Esophagus squamous epithelium (tissue), 5 donors: ENCODE measurements at regions of chr16 and their contacts with region 1.

Region 1: GRCh38 chr16:50354629-50355456 is 13.9 kb downstream of the BRD7 start:
- DNase-seq: no peak
- H3K4me3 ChIP-seq: no peak overlapping the region
- H3K27ac ChIP-seq: no peak overlapping the region
- H3K4me1 ChIP-seq: peaks cover 0 to 12% (median 4%) of the 10 kb centered on the region in 3 donors
- H3K27me3 ChIP-seq: no peaks in the 10 kb centered on the region
- CTCF ChIP-seq: peak in 4 of 6 experiments; percentile 52 to 62 (median 58)
- POLR2A ChIP-seq: no peak

Region 2: DNA sequence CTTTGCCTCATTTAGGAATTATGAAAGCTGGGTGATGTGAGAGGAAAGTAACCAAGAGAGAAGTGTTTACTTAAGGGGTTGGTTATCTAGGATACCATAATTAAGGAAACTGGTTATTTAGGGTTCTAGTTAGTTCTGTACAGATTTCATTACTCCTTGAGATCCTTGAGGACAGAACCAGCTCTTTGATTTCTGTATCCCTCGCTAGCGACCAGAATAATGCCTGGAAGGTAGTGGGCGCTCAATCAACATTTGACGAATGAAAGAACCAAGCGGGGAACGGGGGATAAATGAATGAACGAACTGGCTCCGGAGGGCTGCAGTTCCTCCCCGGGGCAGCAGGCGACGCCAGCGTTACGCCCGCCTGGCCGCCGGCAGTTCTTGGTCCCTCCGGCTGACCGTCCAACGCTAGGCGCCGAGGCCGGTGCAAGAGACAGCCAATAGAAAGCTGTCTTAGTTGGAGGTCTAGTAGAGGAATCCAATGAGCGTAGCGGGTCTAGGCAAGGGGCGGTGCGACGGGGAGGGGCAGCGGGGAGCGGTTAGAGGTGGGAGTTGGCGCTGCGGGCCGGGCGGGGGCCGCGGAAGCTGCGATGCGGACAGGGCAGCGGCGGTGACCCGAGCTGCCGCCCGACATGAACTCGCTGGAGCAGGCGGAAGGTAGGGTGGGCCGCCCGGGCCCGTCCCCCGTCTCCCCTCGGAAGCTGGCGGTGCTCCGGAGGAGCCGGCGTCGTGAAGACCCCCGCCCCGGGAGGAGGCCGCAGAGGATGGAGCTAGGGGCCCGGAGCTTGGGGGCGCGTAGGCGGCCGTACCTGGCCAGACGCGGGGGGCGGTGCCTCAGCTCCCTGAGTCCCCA is 329.9 kb before region 1 on chr16 and contains the start of gene CNEP1R1:
- intact Hi-C with region 1: loop called (anchors 10 kb)
- DNase-seq: peak; percentile 80
- H3K4me3 ChIP-seq: peak within 1 kb of the TSS; percentile 87 to 98 (median 97)
- H3K27ac ChIP-seq: peak within 1 kb of the TSS; percentile 88 to 95 (median 92)
- H3K4me1 ChIP-seq: peaks cover 0 to 39% (median 16%) of the 10 kb centered on the region in 3 donors
- H3K27me3 ChIP-seq: no peaks in the 10 kb centered on the region
- CTCF ChIP-seq: peak; percentile 99 to 100 (median 100)
- POLR2A ChIP-seq: peak in 2 of 4 donors; percentile 57 to 75
- total RNA-seq, gene CNEP1R1: 14.1 to 18.4 (median 14.9) TPM

Region 3: DNA sequence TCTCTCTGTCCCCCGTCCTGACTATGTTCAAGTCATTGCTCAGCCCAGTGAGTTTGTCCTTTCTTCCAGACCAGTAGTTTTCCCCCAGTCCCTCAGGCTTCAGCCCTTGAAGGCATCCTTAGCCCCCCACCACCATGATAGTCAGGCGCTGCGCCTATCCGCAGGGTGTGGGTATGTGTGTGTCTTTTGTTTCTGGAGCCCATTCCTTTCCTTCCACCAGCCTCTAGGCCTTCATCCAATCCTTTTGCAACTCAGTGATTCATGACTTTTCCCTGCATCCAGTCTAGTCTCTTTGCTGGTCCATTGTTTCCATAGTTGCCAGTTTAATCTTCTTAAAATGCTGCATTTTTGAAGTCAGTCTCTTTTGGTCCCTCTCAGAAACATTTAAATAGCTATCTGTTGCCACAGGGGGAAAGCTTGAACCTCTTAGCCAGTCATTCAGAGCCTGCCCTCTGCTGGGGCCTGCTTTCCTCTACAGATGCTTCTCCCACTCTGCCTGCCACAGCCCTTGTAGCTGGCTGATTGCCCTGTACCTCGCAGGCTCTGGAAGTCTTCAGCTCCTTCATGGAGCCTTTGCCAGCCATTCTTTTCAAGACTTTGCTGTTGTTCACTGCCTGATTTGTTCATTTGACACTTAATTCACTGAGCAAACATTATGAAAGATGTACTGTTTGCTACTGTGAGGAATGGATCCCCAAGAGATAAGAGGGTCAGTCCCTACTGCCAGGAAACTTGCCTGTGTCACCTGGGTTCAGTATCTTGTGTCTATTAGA is 144.4 kb before region 1 on chr16:
- intact Hi-C with region 1: loop called (anchors 10 kb)
- DNase-seq: no peak
- H3K4me3 ChIP-seq: no peak overlapping the region
- H3K27ac ChIP-seq: peak overlapping the region in 2 of 4 donors; percentile 10 to 40
- H3K4me1 ChIP-seq: peaks cover 0 to 45% (median 22%) of the 10 kb centered on the region in 3 donors
- H3K27me3 ChIP-seq: no peaks in the 10 kb centered on the region
- CTCF ChIP-seq: peak; percentile 36 to 77 (median 58)
- POLR2A ChIP-seq: no peak

Region 4: DNA sequence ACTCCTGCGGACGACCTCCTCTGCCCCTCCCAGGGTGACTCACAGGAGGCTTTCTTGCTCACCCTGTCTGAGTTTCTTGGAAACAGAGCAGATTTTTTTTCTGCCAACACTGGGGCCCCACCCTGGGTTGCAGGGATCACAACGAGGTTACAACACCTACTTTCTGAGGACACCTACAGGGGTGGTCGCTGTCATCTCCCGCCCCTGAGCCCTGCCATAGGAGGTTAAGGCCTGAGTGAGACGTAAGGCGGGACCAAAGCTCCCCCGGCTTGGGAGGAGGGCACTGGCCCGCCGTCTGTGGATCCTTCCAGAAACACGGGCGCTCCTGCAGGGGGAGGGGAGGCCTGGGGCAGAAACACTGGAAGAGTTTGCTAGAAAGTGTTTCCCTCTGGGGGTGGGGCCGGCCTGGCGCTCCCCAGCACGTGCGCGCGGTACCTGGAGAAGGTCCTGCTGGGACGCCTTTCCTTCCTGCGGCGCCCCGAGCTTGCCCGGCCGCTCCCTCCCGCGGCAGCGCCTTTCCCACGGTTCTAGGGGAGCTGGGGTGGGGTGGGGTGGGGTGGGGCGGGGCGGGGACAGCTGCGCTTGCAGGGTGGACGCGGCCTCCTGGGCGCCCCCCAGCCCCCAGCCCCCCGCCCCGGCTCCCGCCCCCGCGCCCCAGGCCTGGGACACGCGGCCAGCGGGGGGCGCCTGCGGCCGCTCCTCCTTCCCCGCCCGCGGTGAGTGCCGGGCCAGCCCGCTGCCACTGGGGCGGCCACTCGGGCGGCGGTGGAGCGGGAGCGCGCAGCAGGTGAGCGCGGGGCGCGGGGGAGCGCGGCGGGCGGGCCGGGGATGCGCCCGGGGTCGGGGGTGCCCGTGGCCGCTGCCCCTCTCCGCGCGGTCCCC is 109.2 kb before region 1 on chr16:
- intact Hi-C with region 1: loop called (anchors 10 kb)
- DNase-seq: no peak
- H3K4me3 ChIP-seq: peak overlapping the region; percentile 48 to 83 (median 70)
- H3K27ac ChIP-seq: peak overlapping the region; percentile 75 to 93 (median 84)
- H3K4me1 ChIP-seq: peaks cover 13 to 30% (median 18%) of the 10 kb centered on the region in 3 donors
- H3K27me3 ChIP-seq: peaks cover 0 to 13% (median 0%) of the 10 kb centered on the region in 4 donors
- CTCF ChIP-seq: peak in 4 of 6 experiments; percentile 5 to 13 (median 8)
- POLR2A ChIP-seq: no peak

Region 5: DNA sequence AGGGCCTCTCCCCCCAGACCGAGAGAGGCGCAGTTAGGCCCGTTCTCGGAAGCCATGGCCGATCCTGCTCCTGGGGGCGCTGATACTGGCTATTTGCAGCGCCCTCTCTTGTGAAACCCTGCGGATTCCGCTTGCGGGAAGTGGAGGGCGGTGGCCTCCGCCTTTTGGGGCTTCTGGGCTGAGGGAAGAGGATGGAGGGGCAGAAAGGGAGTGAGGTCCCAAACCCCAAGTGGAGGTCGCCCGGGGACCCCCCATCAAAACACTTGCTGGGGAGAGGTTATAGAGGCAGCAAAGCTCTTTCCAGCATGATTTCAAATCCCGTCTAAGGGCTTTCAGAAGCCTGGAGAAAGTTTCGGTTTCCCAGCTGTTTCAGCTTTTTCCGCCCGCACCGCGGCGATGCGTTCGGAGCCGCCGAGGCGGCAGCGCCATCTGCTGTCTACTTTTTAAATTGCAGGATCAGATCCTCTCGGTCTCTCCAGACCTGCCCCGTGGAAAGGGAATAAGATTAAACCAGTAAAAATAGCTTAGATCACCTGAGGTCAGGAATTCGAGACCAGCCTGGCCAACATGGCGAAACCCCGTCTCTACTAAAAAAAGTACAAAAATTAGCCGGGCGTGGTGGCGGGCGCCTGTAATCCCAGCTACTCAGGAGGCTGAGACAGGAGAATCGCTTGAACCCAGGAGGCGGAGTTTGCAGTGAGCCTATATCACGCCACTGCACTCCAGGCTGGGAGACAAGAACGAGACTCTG is 310.5 kb after region 1 on chr16:
- intact Hi-C with region 1: no loop called
- DNase-seq: no peak
- H3K4me3 ChIP-seq: peak overlapping the region; percentile 21 to 68 (median 54)
- H3K27ac ChIP-seq: peak overlapping the region; percentile 6 to 74 (median 72)
- H3K4me1 ChIP-seq: peaks cover 7 to 44% (median 30%) of the 10 kb centered on the region in 3 donors
- H3K27me3 ChIP-seq: no peaks in the 10 kb centered on the region
- CTCF ChIP-seq: peak; percentile 89 to 96 (median 93)
- POLR2A ChIP-seq: no peak